OCI-LY7 (cell line): ENCODE measurements at regions of chr5 and their contacts with region 1.

Region 1: GRCh38 chr5:73448463-73449136 is at the start of gene FOXD1:
- DNase-seq: peak; percentile 58
- H3K4me3 ChIP-seq: peak within 1 kb of the TSS; percentile 65
- H3K27ac ChIP-seq: no peak within 1 kb of the TSS
- H3K4me1 ChIP-seq: peaks cover 12% of the 10 kb centered on the region
- CTCF ChIP-seq: 0 out of 2 replicates have a peak, but pooled peaks have one; percentile 8
- total RNA-seq, gene FOXD1: 0.75 and 1.5 TPM in 2 replicates

Region 2: GRCh38 chr5:72955768-72956323 is 492.8 kb before region 1 on chr5 and contains the start of gene FCHO2:
- CTCF ChIA-PET with region 1: no interaction called
- POLR2A ChIA-PET with region 1: no interaction called
- intact Hi-C with region 1: loop called (anchors 5 kb)
- DNase-seq: peak; percentile 95
- H3K4me3 ChIP-seq: peak within 1 kb of the TSS; percentile 77
- H3K27ac ChIP-seq: no peak within 1 kb of the TSS
- H3K4me1 ChIP-seq: peaks cover 18% of the 10 kb centered on the region
- CTCF ChIP-seq: peak; percentile 83
- total RNA-seq, gene FCHO2: 3.4 and 7.8 TPM in 2 replicates

Region 3: GRCh38 chr5:73088026-73088425 is 360.6 kb before region 1 on chr5:
- CTCF ChIA-PET with region 1: no interaction called
- POLR2A ChIA-PET with region 1: no interaction called
- intact Hi-C with region 1: loop called (anchors 10 kb)
- DNase-seq: no peak
- H3K4me3 ChIP-seq: no peak overlapping the region
- H3K27ac ChIP-seq: no peak overlapping the region
- H3K4me1 ChIP-seq: no peaks in the 10 kb centered on the region
- CTCF ChIP-seq: no peak

Region 4: DNA sequence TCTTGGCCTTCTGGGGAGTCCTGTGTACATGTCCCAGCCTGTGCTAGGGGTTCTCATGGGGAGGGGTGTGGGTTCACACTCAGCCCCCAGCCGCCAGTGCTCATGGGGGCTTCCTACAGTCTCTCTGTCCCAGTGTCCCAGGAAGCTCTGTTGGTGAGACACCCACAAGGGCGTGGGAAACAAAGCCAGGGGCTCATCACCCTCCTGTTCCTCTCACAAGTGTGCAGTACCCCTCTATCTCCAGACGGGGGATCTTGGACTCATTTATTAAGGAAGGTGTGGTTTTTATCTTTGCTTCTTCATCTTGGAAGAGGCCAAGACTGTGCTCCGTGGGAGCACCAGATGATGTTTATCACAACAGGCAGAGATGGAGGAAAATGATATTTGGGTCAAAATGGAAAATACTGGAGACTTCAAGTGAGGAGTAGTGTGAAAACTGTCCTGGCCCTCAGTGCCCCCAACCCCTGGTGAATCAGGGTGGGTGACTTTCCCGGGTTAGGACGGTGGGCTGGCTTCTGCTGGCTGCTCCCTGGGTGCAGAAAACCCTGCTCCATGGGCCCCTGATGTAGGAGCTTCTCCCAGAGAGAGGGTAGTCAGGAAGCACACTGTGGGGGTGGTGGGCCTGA is 313.1 kb before region 1 on chr5:
- CTCF ChIA-PET with region 1: no interaction called
- POLR2A ChIA-PET with region 1: no interaction called
- intact Hi-C with region 1: loop called (anchors 10 kb)
- DNase-seq: peak; percentile 70
- H3K4me3 ChIP-seq: no peak overlapping the region
- H3K27ac ChIP-seq: no peak overlapping the region
- H3K4me1 ChIP-seq: no peaks in the 10 kb centered on the region
- CTCF ChIP-seq: peak; percentile 80

Region 5: GRCh38 chr5:73412597-73412988 is 36.0 kb before region 1 on chr5:
- CTCF ChIA-PET with region 1: no interaction called
- POLR2A ChIA-PET with region 1: no interaction called
- intact Hi-C with region 1: no loop called
- DNase-seq: no peak
- H3K4me3 ChIP-seq: no peak overlapping the region
- H3K27ac ChIP-seq: no peak overlapping the region
- H3K4me1 ChIP-seq: no peaks in the 10 kb centered on the region
- CTCF ChIP-seq: no peak

Region 6: GRCh38 chr5:73498057-73499008 is 49.7 kb after region 1 on chr5 and contains the start of gene BTF3:
- CTCF ChIA-PET with region 1: no interaction called
- POLR2A ChIA-PET with region 1: interaction called, 6 read pairs
- intact Hi-C with region 1: loop called (anchors 1 kb)
- DNase-seq: peak; percentile 97
- H3K4me3 ChIP-seq: peak within 1 kb of the TSS; percentile 98
- H3K27ac ChIP-seq: peak within 1 kb of the TSS; percentile 69
- H3K4me1 ChIP-seq: peaks cover 37% of the 10 kb centered on the region
- CTCF ChIP-seq: no peak
- total RNA-seq, gene BTF3: 350 and 372 TPM in 2 replicates